ENCODE measurements at regions of chr7 and their contacts with region 1.

Region 1: GRCh38 chr7:101287032-101287431 is 34.6 kb downstream of the IFT22 start:
- DNase-seq: no peak
- ATAC-seq: no peak
- H3K4me3 ChIP-seq: no peak overlapping the region
- H3K27ac ChIP-seq: no peak overlapping the region
- H3K4me1 ChIP-seq: no peaks in the 10 kb centered on the region; the same call in 1 of the 2 replicates
- H3K27me3 ChIP-seq: peaks cover 12% of the 10 kb centered on the region; the same call in 1 of the 2 replicates
- CTCF ChIP-seq: no peak

Region 2: DNA sequence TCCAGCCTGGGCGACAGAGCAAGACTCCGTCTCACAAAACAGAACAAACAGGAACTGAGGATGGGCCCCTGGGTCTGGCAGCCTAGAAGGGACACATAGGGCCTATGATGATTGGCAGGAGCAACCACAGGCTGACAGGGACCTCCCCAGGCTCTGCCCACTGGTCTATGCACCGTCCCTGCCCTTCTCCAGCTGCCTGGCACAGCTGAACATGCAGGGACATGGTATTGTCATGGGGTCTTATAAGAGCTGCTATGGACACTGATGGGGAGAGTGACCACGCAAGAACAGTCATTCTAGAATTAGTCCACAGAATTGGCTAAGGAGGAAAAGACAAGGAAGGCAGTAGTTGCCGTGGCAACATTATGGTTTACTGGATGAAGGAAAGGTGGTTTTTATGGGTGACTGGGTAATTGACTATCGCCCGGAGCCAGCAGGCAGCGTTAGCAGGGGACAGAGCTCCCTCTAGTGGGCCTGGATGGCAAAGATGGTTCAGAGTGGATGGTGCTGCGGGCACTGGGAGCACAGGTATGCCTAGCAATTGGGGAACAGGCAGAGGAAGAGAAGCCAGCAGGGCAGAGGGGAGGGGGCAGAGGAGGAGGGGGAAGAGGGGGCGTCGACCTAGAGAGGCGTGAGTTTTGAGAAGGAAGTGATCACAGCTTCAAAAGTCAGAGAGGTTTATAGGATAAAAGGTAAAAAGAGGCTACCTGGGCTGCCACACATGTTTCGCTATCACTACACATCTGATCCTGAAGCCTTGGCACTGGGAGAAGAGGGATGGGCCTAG is 209.5 kb before region 1 on chr7:
- CTCF ChIA-PET with region 1: no interaction called
- POLR2A ChIA-PET with region 1: no interaction called
- intact Hi-C with region 1: no loop called
- DNase-seq: peak; percentile 90
- ATAC-seq: peak; percentile 99
- H3K4me3 ChIP-seq: no peak overlapping the region
- H3K27ac ChIP-seq: no peak overlapping the region
- H3K4me1 ChIP-seq: peaks cover 3% of the 10 kb centered on the region; the same call in 1 of the 2 replicates
- H3K27me3 ChIP-seq: no peaks in the 10 kb centered on the region
- CTCF ChIP-seq: peak; percentile 95

Region 3: DNA sequence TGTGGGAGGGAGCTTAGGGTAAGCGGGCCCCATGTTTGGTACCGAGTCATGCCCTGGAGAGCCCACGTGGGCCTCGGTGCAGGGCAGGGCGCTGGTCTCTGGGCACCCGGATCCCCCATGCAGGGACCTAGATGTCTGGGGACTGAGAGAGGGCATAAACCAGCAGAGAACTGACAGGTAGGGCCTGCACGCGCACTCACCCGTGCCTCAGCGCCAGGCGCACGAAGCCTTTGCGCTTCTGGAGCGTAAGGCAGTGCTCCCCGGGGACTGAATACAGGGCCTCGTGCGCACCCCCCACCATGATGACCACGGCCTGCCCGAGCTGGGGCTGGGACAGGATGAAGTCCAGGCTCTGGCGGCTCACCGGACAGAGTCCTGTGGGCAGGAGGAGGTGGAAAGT is 89.0 kb before region 1 on chr7:
- CTCF ChIA-PET with region 1: interaction called, 16 read pairs
- POLR2A ChIA-PET with region 1: no interaction called
- intact Hi-C with region 1: no loop called
- DNase-seq: no peak
- ATAC-seq: no peak
- H3K4me3 ChIP-seq: no peak overlapping the region
- H3K27ac ChIP-seq: no peak overlapping the region
- H3K4me1 ChIP-seq: no peaks in the 10 kb centered on the region
- H3K27me3 ChIP-seq: no peaks in the 10 kb centered on the region
- CTCF ChIP-seq: no peak

Region 4: GRCh38 chr7:101217388-101218235 is 69.4 kb before region 1 on chr7 and contains the starts of genes PLOD3 and ZNHIT1:
- CTCF ChIA-PET with region 1: interaction called, 11 read pairs
- POLR2A ChIA-PET with region 1: interaction called, 3 read pairs
- intact Hi-C with region 1: no loop called
- DNase-seq: peak; percentile 98
- ATAC-seq: peak; percentile 85
- H3K4me3 ChIP-seq: peak within 1 kb of the TSS; percentile 80
- H3K27ac ChIP-seq: peak within 1 kb of the TSS; percentile 83
- H3K4me1 ChIP-seq: peaks cover 11% of the 10 kb centered on the region
- H3K27me3 ChIP-seq: no peaks in the 10 kb centered on the region
- CTCF ChIP-seq: no peak
- total RNA-seq, gene PLOD3: 60.8 and 66.6 TPM in 2 replicates
- total RNA-seq, gene ZNHIT1: 161 and 188 TPM in 2 replicates

Region 5: GRCh38 chr7:101244375-101245146 is 42.5 kb before region 1 on chr7 and contains the start of gene FIS1:
- CTCF ChIA-PET with region 1: interaction called, 5 read pairs
- POLR2A ChIA-PET with region 1: no interaction called
- intact Hi-C with region 1: loop called (anchors 1 kb)
- DNase-seq: peak; percentile 86
- ATAC-seq: peak; percentile 94
- H3K4me3 ChIP-seq: peak within 1 kb of the TSS; percentile 97
- H3K27ac ChIP-seq: peak within 1 kb of the TSS; percentile 78
- H3K4me1 ChIP-seq: peaks cover 13% of the 10 kb centered on the region
- H3K27me3 ChIP-seq: no peaks in the 10 kb centered on the region
- CTCF ChIP-seq: peak; percentile 90
- total RNA-seq, gene FIS1: 146 and 199 TPM in 2 replicates

Region 6: DNA sequence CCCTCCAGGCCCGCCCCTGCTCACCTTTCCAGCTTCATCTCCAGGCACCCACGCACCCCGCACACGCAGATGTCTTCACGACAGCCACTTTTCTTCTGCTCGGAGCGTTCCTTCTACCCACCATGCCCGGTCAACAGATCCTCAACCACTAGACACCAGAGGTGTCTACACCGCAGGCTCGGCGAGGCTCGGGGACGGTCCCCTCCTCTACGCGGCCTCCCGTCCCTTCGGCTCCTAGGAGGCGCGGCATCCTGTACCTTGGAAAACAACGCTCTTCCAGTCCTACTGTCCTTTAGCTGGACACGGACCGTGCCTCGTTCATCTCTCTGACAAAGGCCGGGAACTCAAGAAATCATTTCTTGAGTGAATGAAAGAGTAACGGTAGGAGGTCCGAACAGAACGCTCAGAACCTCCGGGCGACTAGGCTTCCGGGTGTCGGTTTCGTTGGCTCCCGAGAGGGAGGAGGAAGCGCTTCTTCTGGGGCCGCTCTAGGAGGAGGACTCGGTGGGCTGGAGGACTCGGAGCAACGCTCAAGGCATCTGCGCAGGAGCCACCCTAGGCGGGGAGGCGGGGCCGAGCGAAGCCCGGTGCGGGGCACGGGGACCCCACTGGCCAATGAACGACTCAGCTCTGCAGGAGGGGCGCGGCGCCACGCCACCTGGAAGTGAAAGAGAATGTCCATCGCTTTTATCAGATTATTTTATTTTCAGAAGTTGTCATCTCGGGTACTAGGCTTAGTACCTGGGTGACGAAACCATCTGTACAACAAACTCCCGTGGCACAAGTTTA is 35.0 kb before region 1 on chr7:
- CTCF ChIA-PET with region 1: interaction called, 15 read pairs
- POLR2A ChIA-PET with region 1: no interaction called
- intact Hi-C with region 1: no loop called
- DNase-seq: peak; percentile 97
- ATAC-seq: peak; percentile 100
- H3K4me3 ChIP-seq: peak overlapping the region; percentile 99
- H3K27ac ChIP-seq: peak overlapping the region; percentile 49
- H3K4me1 ChIP-seq: no peaks in the 10 kb centered on the region; the same call in 1 of the 2 replicates
- H3K27me3 ChIP-seq: no peaks in the 10 kb centered on the region
- CTCF ChIP-seq: no peak